Panc1 (cell line): ENCODE measurements at regions of chr19 and their contacts with region 1.

Region 1: GRCh38 chr19:14198384-14199376 is 7.3 kb downstream of the ADGRL1 start:
- DNase-seq: no peak
- ATAC-seq: no peak
- H3K4me3 ChIP-seq: no peak overlapping the region
- H3K27ac ChIP-seq: no peak overlapping the region
- H3K4me1 ChIP-seq: peaks cover 4% of the 10 kb centered on the region; the same call in 1 of the 2 replicates
- H3K27me3 ChIP-seq: no peaks in the 10 kb centered on the region
- CTCF ChIP-seq: peak; percentile 20

Region 2: GRCh38 chr19:14146789-14147216 is 51.9 kb before region 1 on chr19:
- CTCF ChIA-PET with region 1: no interaction called
- POLR2A ChIA-PET with region 1: no interaction called
- in situ Hi-C with region 1: no loop called
- intact Hi-C with region 1: no loop called
- DNase-seq: no peak
- ATAC-seq: peak; percentile 44; the same call in 1 of the 2 replicates
- H3K4me3 ChIP-seq: no peak overlapping the region
- H3K27ac ChIP-seq: peak overlapping the region; percentile 65; the same call in 1 of the 2 replicates
- H3K4me1 ChIP-seq: peaks cover 19% of the 10 kb centered on the region
- H3K27me3 ChIP-seq: no peaks in the 10 kb centered on the region
- CTCF ChIP-seq: no peak

Region 3: DNA sequence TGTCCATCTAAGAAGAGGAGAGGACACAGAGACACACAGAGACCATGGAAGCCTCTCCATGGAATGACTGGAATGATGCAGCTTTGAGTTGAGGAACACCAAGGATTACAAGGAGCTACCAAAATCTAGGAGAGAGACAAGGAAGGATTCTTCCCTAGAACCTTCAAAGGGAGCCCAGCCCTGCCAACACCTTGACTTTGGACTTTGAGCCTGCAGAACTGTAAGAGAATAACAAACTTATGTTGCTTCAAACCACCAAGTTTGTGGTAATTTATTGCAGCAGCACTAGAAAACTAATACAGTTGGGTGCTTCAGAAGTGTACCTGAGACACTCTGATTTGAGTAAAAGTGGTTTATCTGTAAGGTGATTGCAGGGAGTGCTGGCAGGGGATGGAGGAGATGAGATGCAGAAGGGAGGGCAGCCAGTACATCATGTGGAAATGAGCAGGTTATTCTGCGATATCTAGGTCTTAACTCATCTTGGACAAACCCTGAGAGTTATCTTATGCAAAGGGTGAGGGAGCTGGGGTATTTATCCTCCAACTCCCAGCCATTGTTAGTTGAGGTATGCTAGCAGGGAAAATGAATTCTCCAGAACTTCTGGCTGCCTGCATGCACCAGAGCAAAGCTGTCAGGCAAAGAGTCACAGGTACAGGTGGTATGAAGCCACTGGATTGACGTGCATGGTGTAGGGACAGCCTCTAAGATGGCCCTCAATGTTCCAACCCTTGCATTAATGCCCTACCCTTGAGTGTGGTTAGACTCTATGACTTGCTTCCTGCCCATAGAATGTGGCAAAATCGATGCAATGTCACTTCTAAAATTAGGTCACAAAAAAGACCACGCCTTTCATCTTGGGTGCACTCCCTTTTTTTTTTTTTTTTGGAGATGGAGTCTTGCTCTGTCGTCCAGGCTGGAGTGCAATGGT is 38.6 kb after region 1 on chr19:
- CTCF ChIA-PET with region 1: no interaction called
- POLR2A ChIA-PET with region 1: no interaction called
- in situ Hi-C with region 1: no loop called
- intact Hi-C with region 1: no loop called
- DNase-seq: no peak
- ATAC-seq: no peak
- H3K4me3 ChIP-seq: no peak overlapping the region
- H3K27ac ChIP-seq: no peak overlapping the region
- H3K4me1 ChIP-seq: no peaks in the 10 kb centered on the region
- H3K27me3 ChIP-seq: no peaks in the 10 kb centered on the region
- CTCF ChIP-seq: no peak

Region 4: DNA sequence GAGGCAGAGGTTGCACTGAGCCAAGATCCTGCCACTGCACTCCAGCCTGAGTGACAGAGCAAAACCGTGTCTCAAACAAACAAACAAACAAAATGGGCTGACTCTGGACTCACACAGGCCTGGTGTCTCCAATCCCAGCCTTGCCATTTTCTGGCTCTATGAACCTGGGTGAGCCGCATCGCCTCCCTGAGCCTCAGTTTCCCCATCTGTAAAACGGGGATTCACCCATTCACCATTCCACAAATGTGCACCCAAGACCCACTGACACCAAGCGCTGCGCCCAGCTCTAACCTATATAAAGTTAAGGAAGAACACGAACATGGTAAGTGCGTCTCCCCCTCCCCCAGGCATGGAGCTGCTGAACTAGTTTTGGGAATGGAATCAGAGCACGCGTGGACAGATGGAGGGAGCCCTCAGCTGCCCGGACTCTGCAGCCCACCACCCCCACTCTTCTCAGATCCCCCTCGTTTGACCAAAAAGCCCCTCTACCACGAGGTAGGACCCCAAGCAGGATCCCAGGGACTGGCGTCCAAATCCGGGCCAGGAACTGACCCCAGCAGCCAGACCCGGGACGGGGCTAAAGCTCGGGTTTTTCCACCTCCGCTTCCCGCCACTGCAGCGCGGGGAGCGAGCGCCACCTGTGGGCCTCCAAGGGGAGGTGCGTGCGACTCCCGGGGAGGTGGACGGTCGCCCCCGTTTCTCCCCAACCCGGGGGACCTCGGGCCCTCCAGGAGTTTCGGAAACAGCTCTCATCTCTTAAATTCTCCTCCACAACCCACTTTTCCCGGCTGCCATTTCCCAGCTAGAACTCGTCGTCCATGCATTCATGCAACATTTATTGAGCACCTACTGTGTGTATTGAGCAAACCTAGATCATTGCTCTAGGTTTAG is 149.6 kb after region 1 on chr19:
- CTCF ChIA-PET with region 1: interaction called, 3 read pairs
- POLR2A ChIA-PET with region 1: interaction called, 8 read pairs
- in situ Hi-C with region 1: no loop called
- intact Hi-C with region 1: loop called (anchors 10 kb)
- DNase-seq: no peak
- ATAC-seq: peak; percentile 86
- H3K4me3 ChIP-seq: peak overlapping the region; percentile 18 to 46
- H3K27ac ChIP-seq: no peak overlapping the region
- H3K4me1 ChIP-seq: no peaks in the 10 kb centered on the region; the same call in 1 of the 2 replicates
- H3K27me3 ChIP-seq: no peaks in the 10 kb centered on the region
- CTCF ChIP-seq: peak; percentile 97